ENCODE measurements at regions of chr6 and their contacts with region 1.

Region 1: DNA sequence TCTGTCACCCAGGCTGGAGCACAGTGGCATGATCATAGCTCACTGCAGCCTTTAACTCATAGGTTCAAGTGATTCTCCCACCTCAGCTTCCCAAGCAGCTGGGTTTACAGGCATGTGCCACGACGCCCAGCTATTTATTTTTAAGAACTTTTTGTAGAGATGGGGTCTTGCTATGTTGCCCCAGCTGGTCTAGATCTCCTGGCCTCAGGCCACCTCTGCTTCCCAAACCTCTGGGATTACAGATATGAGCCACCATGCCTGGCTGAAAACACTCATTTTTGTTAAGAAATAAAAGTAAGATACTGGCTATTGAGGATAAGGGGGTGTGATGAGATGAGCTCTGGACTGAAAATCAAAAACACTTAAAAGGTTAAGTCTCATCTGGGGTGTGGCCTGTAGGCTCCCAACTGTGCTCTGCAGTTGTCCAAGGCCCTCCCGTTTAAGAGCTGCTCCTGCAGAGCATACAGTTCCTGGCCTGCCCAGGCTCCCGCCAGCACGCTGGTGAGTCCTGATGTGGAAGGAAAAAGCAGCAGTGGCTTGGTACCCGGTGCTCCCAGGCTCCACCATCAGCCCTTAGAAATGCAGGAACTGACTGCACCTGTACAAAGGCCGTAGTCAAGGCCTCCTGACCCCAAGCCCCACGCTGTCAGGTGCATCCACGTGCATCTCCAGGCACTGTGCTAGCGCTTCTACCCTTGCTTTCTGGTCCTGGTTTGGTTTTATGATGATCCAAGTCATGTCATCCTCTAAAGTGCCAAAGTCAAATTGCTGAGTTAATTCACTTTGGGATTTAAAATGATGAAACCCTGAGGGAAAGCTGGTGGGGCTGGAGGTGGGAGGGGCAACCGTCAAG is 111.5 kb downstream of the TMEM242 start:
- DNase-seq: no peak
- H3K4me3 ChIP-seq: no peak overlapping the region
- CTCF ChIP-seq: no peak

Region 2: GRCh38 chr6:157177731-157178336 is 34.0 kb before region 1 on chr6:
- in situ Hi-C with region 1: loop called (anchors 5 kb)
- DNase-seq: no peak
- H3K4me3 ChIP-seq: no peak overlapping the region
- CTCF ChIP-seq: no peak

Measured in astrocyte of the cerebellum (primary cell).